Activated CD4-positive, alpha-beta T cell treated with anti-CD3 and anti-CD28 coated beads for 36 hours (primary cell): ENCODE measurements at regions of chr2 and their contacts with region 1.

Region 1: DNA sequence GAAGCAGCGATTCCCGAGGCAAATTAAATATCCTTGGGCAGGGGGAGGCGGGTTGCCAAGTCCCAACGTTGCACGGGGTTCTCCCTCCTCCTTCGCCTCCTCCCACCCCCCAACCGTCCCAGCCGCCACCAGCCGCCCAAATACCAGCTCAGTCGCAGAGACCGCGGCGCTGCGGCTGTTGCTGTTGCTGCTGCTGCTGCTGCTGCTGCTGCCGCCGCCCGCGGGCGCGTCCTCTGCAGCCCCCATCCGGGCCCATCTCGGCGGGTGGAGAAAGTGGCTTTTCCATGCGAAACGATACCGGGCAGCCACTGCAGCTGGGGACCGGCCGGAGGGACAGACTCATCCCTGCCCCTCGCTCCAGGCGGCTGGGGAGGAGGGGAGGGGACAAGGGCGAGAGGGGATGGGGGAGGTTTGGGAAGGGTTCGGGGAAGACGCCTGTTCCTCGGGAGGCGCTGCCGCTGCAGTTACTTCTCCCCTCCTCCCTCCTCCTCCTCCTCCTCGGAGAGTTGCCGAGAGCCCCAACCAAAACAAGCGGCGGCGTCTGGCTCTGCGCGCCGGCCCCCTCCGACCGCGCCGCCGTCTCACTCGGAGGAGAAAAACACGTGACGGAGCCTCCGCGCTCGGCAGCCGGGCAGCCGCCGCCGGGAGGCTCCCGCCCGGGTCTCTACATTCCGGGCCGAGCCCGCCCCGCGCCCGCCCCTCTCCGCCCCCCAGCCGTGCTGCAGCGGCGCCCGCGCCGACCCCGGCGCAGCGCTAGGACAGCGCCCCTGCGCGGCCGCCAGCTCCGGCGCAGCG is at the start of gene IRS1:
- DNase-seq: peak; percentile 82
- ATAC-seq: peak; percentile 63
- H3K4me3 Mint-ChIP-seq: peak within 1 kb of the TSS; percentile 75
- H3K27ac Mint-ChIP-seq: peak within 1 kb of the TSS; percentile 70
- H3K4me1 Mint-ChIP-seq: peaks cover 25% of the 10 kb centered on the region
- H3K27me3 Mint-ChIP-seq: peaks cover 6% of the 10 kb centered on the region
- total RNA-seq, gene IRS1: 2.6 to 3.3 TPM

Region 2: GRCh38 chr2:225889446-225889850 is 909.9 kb before region 1 on chr2:
- CTCF ChIA-PET with region 1: interaction called, 3 read pairs
- POLR2A ChIA-PET with region 1: no interaction called
- intact Hi-C with region 1: loop called (anchors 1 to 2 kb)
- DNase-seq: no peak
- ATAC-seq: no peak
- H3K4me3 Mint-ChIP-seq: no peak overlapping the region
- H3K27ac Mint-ChIP-seq: no peak overlapping the region
- H3K4me1 Mint-ChIP-seq: no peaks in the 10 kb centered on the region
- H3K27me3 Mint-ChIP-seq: peaks cover 11% of the 10 kb centered on the region

Region 3: GRCh38 chr2:226215902-226216503 is 583.4 kb before region 1 on chr2:
- CTCF ChIA-PET with region 1: interaction called, 11 read pairs
- POLR2A ChIA-PET with region 1: no interaction called
- intact Hi-C with region 1: loop called (anchors 1 kb)
- DNase-seq: peak; percentile 80
- ATAC-seq: peak; percentile 95
- H3K4me3 Mint-ChIP-seq: no peak overlapping the region
- H3K27ac Mint-ChIP-seq: no peak overlapping the region
- H3K4me1 Mint-ChIP-seq: no peaks in the 10 kb centered on the region
- H3K27me3 Mint-ChIP-seq: peaks cover 3% of the 10 kb centered on the region

Region 4: DNA sequence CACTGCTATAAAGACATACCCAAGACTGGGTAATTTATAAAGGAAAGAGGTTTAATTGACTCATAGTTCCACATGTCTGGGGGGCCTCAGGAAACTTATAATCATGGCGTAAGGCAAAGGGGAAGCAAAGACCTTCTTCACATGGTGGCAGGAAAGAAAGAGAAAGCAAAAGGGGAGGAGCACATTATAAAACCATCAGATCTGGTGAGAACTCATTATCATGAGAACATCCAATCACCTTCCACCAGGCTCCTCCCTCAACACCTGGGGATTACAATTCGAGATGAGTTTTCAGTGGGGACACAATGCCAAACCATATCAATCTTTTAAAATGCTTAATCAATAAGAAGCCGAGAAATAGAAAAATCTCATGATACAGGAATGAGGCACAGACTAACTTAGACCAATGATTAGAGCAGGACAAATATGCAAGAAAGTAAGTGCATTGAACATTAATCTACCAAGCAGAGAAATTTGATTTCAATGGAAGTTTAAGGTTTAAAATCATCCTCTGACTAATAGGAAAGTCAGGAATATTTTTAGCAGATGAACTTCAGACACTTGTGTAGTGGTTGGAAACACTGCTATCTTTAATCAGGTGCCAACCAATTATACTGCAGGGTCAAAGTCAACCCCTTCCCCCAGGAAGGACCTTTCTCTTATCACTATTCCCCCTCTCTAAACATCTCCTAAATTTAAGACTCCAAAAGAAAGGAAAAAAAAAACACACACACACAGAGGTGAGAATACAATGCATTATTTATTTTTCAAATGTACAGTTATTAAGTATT is 259.0 kb before region 1 on chr2:
- CTCF ChIA-PET with region 1: no interaction called
- POLR2A ChIA-PET with region 1: no interaction called
- intact Hi-C with region 1: no loop called
- DNase-seq: no peak
- ATAC-seq: no peak
- H3K4me3 Mint-ChIP-seq: no peak overlapping the region
- H3K27ac Mint-ChIP-seq: no peak overlapping the region
- H3K4me1 Mint-ChIP-seq: no peaks in the 10 kb centered on the region
- H3K27me3 Mint-ChIP-seq: peaks cover 17% of the 10 kb centered on the region

Region 5: DNA sequence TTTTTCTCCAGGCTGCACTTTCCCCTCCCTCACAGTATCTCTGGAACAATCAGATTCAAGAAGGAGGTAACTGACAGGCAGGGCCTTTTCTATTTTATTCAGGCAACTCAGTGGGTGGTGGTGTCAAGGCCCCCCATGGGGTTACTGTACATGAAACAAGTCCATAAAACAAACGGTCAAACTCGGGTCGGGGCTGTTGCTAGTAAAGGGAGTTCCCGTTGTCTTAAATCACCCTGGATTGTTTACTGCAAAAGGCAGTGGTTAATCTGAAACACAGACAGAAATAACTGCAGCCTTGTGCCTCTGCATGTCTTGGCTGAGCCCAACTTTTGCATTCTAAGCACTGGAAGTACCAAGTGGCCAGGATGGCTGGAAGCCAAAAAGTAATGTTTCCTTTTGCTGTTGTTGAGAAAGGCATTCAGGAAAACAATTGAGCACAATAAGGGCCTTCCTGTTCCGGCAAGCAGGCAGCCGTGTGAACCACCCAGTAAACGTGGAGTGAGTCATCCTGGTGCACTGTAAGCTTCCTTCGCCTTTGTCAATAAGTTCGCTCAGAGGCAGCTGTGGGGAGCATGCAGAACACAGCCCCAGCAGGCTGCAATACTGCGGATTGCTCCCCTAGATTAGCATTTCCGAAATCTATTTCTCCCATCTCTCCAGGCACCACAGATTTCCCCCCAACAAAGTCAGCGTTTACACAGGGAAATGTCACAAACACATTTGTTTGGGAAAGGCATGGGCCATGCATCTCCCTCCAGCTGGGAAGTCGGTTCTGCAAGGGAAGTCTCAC is 149.3 kb before region 1 on chr2:
- CTCF ChIA-PET with region 1: interaction called, 4 read pairs
- POLR2A ChIA-PET with region 1: no interaction called
- intact Hi-C with region 1: loop called in 1 of 2 experiments (anchors 2 kb)
- DNase-seq: peak; percentile 65
- ATAC-seq: peak; percentile 97
- H3K4me3 Mint-ChIP-seq: no peak overlapping the region
- H3K27ac Mint-ChIP-seq: peak overlapping the region; percentile 43
- H3K4me1 Mint-ChIP-seq: peaks cover 20% of the 10 kb centered on the region
- H3K27me3 Mint-ChIP-seq: peaks cover 4% of the 10 kb centered on the region

Region 6: GRCh38 chr2:226818930-226819329 is 19.6 kb after region 1 on chr2:
- CTCF ChIA-PET with region 1: interaction called, 23 read pairs
- POLR2A ChIA-PET with region 1: no interaction called
- intact Hi-C with region 1: no loop called
- DNase-seq: no peak
- ATAC-seq: no peak
- H3K4me3 Mint-ChIP-seq: no peak overlapping the region
- H3K27ac Mint-ChIP-seq: no peak overlapping the region
- H3K4me1 Mint-ChIP-seq: no peaks in the 10 kb centered on the region
- H3K27me3 Mint-ChIP-seq: peaks cover 6% of the 10 kb centered on the region

Region 7: DNA sequence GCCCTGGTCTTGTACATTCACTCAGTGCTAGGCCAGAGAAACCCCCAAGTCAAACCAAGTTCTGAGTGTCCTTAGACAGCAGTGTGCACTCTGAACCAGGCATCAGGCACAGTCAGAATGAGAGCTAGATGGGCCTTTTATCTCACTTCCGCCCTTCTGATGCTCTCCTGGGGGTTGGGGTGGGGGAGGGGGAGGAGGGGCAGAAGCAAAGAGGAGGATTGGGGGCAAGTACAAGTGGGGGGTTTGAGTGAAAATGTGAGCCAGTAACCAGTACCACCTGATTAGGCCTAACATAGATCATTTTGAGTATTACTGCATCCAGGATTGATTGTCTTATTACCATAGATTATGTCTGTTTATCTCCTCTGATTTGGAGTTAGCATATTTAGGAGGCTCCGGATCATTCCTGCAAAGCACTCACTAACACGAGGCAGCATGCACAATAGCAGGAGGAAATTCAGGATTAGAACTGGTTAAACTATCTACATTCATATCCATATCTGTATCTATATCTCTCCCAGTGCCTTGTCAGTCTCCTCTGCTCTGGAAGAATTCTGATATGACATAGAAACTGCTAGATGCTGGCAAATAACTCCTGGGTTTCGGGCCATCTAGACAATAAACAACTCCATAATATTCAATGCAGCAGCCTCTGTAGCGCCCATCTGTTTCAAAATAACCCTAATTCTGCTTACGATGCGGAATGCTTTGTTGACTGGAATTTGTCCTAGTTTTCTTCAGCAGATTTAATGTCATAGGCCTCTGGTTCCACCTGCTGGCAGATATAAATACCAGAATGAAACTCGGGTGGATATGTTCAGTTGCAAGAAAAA is 185.6 kb after region 1 on chr2:
- CTCF ChIA-PET with region 1: interaction called, 7 read pairs
- POLR2A ChIA-PET with region 1: no interaction called
- intact Hi-C with region 1: loop called (anchors 2 kb)
- DNase-seq: peak; percentile 49
- ATAC-seq: peak; percentile 96
- H3K4me3 Mint-ChIP-seq: no peak overlapping the region
- H3K27ac Mint-ChIP-seq: no peak overlapping the region
- H3K4me1 Mint-ChIP-seq: peaks cover 33% of the 10 kb centered on the region
- H3K27me3 Mint-ChIP-seq: no peaks in the 10 kb centered on the region

Region 8: GRCh38 chr2:227025510-227025909 is 226.1 kb after region 1 on chr2:
- CTCF ChIA-PET with region 1: no interaction called
- POLR2A ChIA-PET with region 1: no interaction called
- intact Hi-C with region 1: no loop called
- DNase-seq: no peak
- ATAC-seq: no peak
- H3K4me3 Mint-ChIP-seq: no peak overlapping the region
- H3K27ac Mint-ChIP-seq: no peak overlapping the region
- H3K4me1 Mint-ChIP-seq: no peaks in the 10 kb centered on the region
- H3K27me3 Mint-ChIP-seq: peaks cover 3% of the 10 kb centered on the region